MCF 10A (cell line): ENCODE measurements at regions of chr4 and their contacts with region 1.

Region 1: GRCh38 chr4:124111922-124112321 is 600.6 kb downstream of the ANKRD50 start:
- DNase-seq: peak; percentile 69
- H3K4me3 Mint-ChIP-seq: no peak overlapping the region
- H3K27ac Mint-ChIP-seq: no peak overlapping the region
- H3K4me1 Mint-ChIP-seq: no peaks in the 10 kb centered on the region
- H3K27me3 Mint-ChIP-seq: no peaks in the 10 kb centered on the region
- CTCF ChIP-seq: peak; percentile 75

Region 2: DNA sequence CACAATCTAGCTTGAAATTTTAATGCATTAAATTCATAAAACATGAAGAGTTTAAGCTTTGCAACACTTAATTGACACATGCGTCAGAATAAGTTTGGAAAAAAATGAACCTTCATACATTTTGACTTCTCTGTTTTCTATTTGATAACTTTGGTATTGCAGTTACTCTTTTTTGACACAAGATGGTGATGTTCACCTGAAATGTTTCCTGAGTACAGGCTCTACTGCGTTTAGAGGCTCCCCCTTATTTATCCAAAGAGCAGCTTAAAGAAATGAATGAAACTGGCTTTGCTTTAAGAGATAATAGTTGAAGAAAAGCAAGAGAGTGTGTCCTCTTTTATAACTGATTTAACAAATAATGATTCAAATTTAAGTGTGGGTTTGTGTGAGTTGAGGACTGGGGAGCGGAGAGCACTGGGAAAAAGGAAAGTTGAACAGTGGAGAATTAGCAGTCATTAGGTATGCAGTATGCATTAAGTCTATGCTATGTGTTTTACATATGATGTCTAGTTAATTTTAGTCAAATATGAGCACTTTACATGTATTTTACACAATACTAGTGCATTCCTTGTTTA is 1008.9 kb before region 1 on chr4:
- CTCF ChIA-PET with region 1: interaction called, 4 read pairs
- POLR2A ChIA-PET with region 1: no interaction called
- intact Hi-C with region 1: loop called (anchors 1 kb)
- DNase-seq: peak; percentile 49
- H3K4me3 Mint-ChIP-seq: no peak overlapping the region
- H3K27ac Mint-ChIP-seq: peak overlapping the region; percentile 29
- H3K4me1 Mint-ChIP-seq: peaks cover 5% of the 10 kb centered on the region
- H3K27me3 Mint-ChIP-seq: no peaks in the 10 kb centered on the region
- CTCF ChIP-seq: peak; percentile 58

Region 3: GRCh38 chr4:123350191-123350544 is 761.8 kb before region 1 on chr4:
- CTCF ChIA-PET with region 1: no interaction called
- POLR2A ChIA-PET with region 1: no interaction called
- intact Hi-C with region 1: loop called (anchors 2 kb)
- DNase-seq: peak; percentile 73
- H3K4me3 Mint-ChIP-seq: no peak overlapping the region
- H3K27ac Mint-ChIP-seq: no peak overlapping the region
- H3K4me1 Mint-ChIP-seq: peaks cover 23% of the 10 kb centered on the region
- H3K27me3 Mint-ChIP-seq: no peaks in the 10 kb centered on the region
- CTCF ChIP-seq: peak; percentile 35

Region 4: DNA sequence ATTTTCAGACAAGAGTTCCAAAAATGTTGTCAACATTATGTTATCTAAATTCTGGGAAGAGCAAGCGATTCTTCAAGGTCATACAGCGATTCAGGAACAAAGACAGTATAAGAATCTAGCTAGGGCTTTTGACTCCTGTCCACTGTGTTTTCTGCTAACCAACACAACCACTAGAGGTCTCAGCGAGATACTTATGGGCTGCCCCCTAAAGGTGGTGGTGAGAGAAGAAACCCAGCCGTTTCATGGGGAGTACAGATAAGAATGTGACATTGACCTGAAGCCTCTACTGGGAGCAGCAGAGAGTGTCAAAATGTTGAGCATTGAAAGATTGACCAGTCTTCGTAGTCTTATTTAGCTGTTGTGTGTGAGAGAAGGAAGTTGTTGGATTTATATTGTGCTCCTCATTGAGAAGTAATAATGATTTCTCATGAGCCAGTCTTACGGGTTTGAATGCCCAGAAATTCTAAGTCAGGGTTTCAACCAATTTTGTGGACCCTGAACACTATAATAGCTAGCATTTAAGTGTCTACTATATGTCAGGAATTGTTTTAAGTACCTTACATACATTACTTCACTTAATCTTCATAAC is 547.1 kb before region 1 on chr4:
- CTCF ChIA-PET with region 1: no interaction called
- POLR2A ChIA-PET with region 1: no interaction called
- intact Hi-C with region 1: loop called (anchors 5 kb)
- DNase-seq: peak; percentile 86
- H3K4me3 Mint-ChIP-seq: no peak overlapping the region
- H3K27ac Mint-ChIP-seq: no peak overlapping the region
- H3K4me1 Mint-ChIP-seq: peaks cover 7% of the 10 kb centered on the region
- H3K27me3 Mint-ChIP-seq: no peaks in the 10 kb centered on the region
- CTCF ChIP-seq: peak; percentile 55

Region 5: GRCh38 chr4:123767806-123768205 is 344.1 kb before region 1 on chr4:
- CTCF ChIA-PET with region 1: interaction called, 72 read pairs
- POLR2A ChIA-PET with region 1: no interaction called
- intact Hi-C with region 1: loop called (anchors 1 kb)
- DNase-seq: no peak
- H3K4me3 Mint-ChIP-seq: no peak overlapping the region
- H3K27ac Mint-ChIP-seq: no peak overlapping the region
- H3K4me1 Mint-ChIP-seq: peaks cover 2% of the 10 kb centered on the region
- H3K27me3 Mint-ChIP-seq: no peaks in the 10 kb centered on the region
- CTCF ChIP-seq: no peak

Region 6: DNA sequence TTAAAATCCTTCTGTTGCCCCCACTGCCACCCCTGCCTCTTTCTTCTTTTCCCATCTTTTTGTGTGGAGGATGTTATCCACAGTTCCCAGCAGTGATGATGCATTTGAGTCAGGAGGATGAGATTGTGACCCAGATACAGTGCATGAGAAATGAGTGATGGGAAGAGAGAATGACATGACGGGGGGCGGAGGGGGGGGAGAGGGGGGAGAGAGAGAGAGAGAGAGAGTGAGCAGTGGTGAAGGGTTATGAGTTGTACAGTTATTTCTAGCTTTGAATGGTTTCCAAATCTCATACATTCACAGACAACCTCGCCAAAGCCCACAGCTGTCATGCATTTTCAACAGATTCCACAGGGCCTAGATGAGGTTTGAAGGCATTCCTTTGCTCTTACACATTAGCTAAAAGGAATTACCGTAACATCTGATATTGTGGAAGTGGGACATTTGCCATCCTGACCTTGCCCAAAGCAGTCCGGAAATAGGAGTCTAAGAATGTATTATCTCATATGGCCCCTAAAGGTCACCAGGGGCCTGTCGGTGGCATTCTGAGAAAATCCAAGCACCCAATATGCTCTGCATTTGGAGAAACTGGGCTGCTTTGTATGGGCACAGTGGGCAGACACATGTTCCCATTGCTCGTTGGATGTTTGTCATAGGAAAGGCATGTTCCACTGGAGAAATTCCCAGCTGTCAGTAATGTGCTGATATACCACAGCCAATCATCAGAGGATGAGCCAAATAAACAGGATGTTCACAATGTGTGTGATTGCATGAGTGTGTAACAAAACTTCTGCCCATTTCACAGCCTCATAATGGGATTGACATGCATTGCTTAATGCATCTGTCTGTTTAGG is 279.5 kb before region 1 on chr4:
- CTCF ChIA-PET with region 1: no interaction called
- POLR2A ChIA-PET with region 1: no interaction called
- intact Hi-C with region 1: loop called (anchors 5 kb)
- DNase-seq: peak; percentile 91
- H3K4me3 Mint-ChIP-seq: peak overlapping the region; percentile 48
- H3K27ac Mint-ChIP-seq: peak overlapping the region; percentile 96
- H3K4me1 Mint-ChIP-seq: peaks cover 37% of the 10 kb centered on the region
- H3K27me3 Mint-ChIP-seq: no peaks in the 10 kb centered on the region
- CTCF ChIP-seq: no peak

Region 7: GRCh38 chr4:124322234-124323065 is 210.5 kb after region 1 on chr4:
- CTCF ChIA-PET with region 1: interaction called, 4 read pairs
- POLR2A ChIA-PET with region 1: interaction called, 3 read pairs
- intact Hi-C with region 1: loop called (anchors 1 kb)
- DNase-seq: peak; percentile 59
- H3K4me3 Mint-ChIP-seq: no peak overlapping the region
- H3K27ac Mint-ChIP-seq: no peak overlapping the region
- H3K4me1 Mint-ChIP-seq: no peaks in the 10 kb centered on the region
- H3K27me3 Mint-ChIP-seq: no peaks in the 10 kb centered on the region
- CTCF ChIP-seq: peak; percentile 52

Region 8: DNA sequence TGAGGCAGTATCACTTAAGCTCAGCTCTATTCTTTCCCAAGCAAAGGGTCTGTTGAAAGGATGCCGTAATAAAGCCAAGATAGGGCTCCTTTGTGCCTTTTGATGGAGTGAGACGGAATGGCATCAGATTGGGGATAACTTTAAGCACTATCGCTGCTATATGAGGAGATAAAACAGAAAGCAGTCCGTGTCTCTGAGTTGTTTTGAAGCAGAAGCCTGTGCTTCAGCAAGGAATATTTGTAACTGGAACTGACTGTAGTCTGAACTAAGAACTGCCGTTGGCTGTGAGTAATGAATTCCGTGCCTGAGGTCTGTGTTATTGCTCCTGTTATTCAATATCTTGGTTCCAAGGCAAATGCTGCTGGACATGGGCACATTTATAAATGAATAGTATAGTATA is 303.2 kb after region 1 on chr4:
- CTCF ChIA-PET with region 1: no interaction called
- POLR2A ChIA-PET with region 1: no interaction called
- intact Hi-C with region 1: no loop called
- DNase-seq: no peak
- H3K4me3 Mint-ChIP-seq: no peak overlapping the region
- H3K27ac Mint-ChIP-seq: no peak overlapping the region
- H3K4me1 Mint-ChIP-seq: no peaks in the 10 kb centered on the region
- H3K27me3 Mint-ChIP-seq: no peaks in the 10 kb centered on the region
- CTCF ChIP-seq: no peak